HCT116 (cell line): ENCODE measurements at regions of chr4 and their contacts with region 1.

Region 1: DNA sequence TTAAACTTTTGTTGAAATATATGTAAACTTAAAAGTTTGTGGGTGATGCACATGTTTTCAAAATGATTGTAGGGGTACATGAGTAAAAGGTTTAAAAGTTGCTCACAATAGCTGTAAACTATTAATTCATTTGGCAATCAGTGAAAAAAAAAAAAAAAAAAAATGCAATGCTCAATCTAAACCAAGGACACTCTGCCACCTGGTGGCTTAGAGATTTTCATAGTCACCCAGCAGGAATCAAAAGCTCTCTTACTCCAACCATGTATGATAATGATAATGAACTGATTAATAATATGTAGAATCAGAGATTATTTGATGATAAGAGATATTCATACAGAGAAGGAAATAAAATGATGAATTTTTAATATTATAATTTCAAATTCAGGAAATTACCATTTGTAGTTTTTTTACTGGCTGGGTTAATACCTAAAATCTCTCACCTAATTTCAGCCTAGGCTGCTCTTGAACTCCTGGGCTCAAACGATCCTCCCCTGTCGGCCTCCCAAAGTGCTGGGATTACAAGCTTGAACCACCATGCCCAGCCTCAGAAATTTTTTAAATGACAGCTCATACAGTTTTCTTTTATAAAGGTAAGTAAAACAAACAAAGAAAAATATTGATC is 46.9 kb upstream of the SLC25A4 start:
- DNase-seq: peak; percentile 34
- ATAC-seq: peak; percentile 75
- H3K4me3 ChIP-seq: no peak overlapping the region
- H3K27ac ChIP-seq: no peak overlapping the region
- H3K4me1 ChIP-seq: no peaks in the 10 kb centered on the region; a peak in 1 of 4 replicates
- H3K27me3 ChIP-seq: no peaks in the 10 kb centered on the region
- CTCF ChIP-seq: peak; percentile 58 to 74 (median 71)
- POLR2A ChIP-seq: no peak
- RAD21 ChIP-seq: peak; percentile 80

Region 2: DNA sequence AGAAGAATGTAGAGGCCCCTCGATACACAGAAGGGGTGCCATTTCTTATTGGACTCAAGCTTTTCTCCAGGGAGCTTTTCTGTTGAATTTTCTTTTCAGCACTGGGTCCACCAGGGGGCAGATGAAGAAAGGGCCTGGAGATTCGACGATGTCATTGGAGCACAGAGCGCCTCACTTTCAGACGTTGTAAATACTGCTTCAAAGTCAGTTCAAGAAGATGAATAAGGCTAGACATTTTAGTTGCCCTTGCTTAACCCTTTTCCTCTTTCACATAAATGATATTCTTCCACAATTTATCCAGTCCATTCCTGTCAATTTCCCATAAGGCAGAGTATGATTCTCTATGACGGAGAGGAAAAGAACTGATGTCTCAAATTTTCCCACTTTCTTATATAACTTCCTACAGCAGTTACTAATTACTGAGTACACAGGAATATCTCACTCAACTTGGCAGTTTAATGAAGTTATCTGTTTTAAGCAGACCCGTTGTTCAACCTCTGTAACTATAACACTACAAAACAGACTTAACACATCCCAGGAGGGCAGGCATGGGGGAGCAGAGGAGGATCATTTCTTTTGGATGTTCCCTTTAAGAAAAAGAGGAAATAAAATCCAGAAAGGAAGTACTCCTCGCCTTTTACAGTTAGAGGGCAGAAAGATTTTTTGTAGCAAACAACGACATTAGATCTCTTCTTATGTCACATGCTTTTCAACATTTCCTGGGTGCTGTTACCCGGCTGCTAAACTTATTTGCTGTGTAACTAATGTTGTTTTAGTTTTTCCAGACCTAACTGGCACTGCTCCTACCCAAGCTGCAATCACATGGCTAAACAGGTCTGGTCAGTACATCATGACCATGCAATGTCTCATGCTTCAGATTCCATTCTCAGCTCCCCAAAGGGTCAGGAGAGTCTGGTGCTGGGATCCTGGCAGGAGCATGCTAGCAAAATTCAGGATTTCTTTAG is 350.0 kb before region 1 on chr4:
- CTCF ChIA-PET with region 1: interaction called, 5 read pairs
- POLR2A ChIA-PET with region 1: no interaction called
- RAD21 ChIA-PET with region 1: no interaction called
- intact Hi-C with region 1: loop called (anchors 5 kb)
- DNase-seq: peak; percentile 29
- ATAC-seq: peak; percentile 79
- H3K4me3 ChIP-seq: no peak overlapping the region
- H3K27ac ChIP-seq: no peak overlapping the region
- H3K4me1 ChIP-seq: peaks cover 0 to 9% of the 10 kb centered on the region in 2 experiments; a peak in 1 of 4 replicates
- H3K27me3 ChIP-seq: no peaks in the 10 kb centered on the region
- CTCF ChIP-seq: peak; percentile 57 to 66 (median 57)
- POLR2A ChIP-seq: no peak
- RAD21 ChIP-seq: peak; percentile 80

Region 3: GRCh38 chr4:185039508-185040273 is 56.5 kb before region 1 on chr4:
- CTCF ChIA-PET with region 1: interaction called, 39 read pairs
- POLR2A ChIA-PET with region 1: interaction called, 5 read pairs
- RAD21 ChIA-PET with region 1: interaction called in 1 of 2 experiments, 5 read pairs
- intact Hi-C with region 1: loop called (anchors 1 kb)
- DNase-seq: peak; percentile 62
- ATAC-seq: peak; percentile 95
- H3K4me3 ChIP-seq: peak overlapping the region in 1 of 2 experiments; percentile 39; a peak in 3 of 4 replicates
- H3K27ac ChIP-seq: no peak overlapping the region
- H3K4me1 ChIP-seq: peaks cover 0 to 7% of the 10 kb centered on the region in 2 experiments; a peak in 1 of 4 replicates
- H3K27me3 ChIP-seq: no peaks in the 10 kb centered on the region
- CTCF ChIP-seq: peak; percentile 79 to 92 (median 80)
- POLR2A ChIP-seq: no peak
- RAD21 ChIP-seq: peak; percentile 90

Region 4: GRCh38 chr4:185108669-185109068 is 12.5 kb after region 1 on chr4:
- CTCF ChIA-PET with region 1: interaction called, 21 read pairs
- POLR2A ChIA-PET with region 1: no interaction called
- RAD21 ChIA-PET with region 1: no interaction called
- intact Hi-C with region 1: no loop called
- DNase-seq: no peak
- ATAC-seq: no peak
- H3K4me3 ChIP-seq: no peak overlapping the region
- H3K27ac ChIP-seq: no peak overlapping the region
- H3K4me1 ChIP-seq: peaks cover 31 to 56% of the 10 kb centered on the region in 2 experiments
- H3K27me3 ChIP-seq: no peaks in the 10 kb centered on the region
- CTCF ChIP-seq: no peak
- POLR2A ChIP-seq: no peak
- RAD21 ChIP-seq: no peak

Region 5: DNA sequence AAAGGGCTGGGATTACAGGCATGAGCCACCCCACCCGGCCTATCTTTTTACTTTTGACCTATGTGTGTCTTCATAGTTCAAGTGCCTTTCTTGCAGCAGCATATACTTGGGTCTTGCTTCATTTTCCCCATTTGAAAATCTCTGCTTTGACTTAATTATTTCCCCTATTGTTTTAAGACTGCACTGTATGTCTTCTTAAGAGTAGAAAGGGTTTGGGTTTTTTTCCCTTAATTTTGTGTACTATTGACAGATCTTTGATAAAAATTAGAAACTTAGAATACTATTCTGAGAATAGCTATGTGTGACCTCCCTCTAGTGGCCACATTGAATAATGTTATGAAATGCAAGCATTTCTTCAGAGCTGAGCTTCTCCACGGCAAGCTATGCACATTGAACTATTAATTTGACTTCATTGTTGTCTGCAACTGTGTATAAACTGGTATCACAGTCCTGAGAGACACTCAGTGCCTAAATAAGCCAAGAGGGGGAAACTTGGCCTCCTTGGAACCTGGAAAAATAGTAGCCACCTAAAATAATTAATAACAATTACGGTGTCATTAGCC is 38.2 kb after region 1 on chr4:
- CTCF ChIA-PET with region 1: interaction called, 33 read pairs
- POLR2A ChIA-PET with region 1: interaction called, 4 read pairs
- RAD21 ChIA-PET with region 1: no interaction called
- intact Hi-C with region 1: no loop called
- DNase-seq: peak; percentile 59
- ATAC-seq: peak; percentile 85
- H3K4me3 ChIP-seq: no peak overlapping the region
- H3K27ac ChIP-seq: no peak overlapping the region
- H3K4me1 ChIP-seq: peaks cover 2 to 5% of the 10 kb centered on the region in 2 experiments; a peak in 1 of 4 replicates
- H3K27me3 ChIP-seq: no peaks in the 10 kb centered on the region
- CTCF ChIP-seq: peak; percentile 57 to 92 (median 89); a peak in 5 of 6 replicates
- POLR2A ChIP-seq: no peak
- RAD21 ChIP-seq: peak; percentile 96